Panc1 (cell line): ENCODE measurements at regions of chr11 and their contacts with region 1.

Region 1: DNA sequence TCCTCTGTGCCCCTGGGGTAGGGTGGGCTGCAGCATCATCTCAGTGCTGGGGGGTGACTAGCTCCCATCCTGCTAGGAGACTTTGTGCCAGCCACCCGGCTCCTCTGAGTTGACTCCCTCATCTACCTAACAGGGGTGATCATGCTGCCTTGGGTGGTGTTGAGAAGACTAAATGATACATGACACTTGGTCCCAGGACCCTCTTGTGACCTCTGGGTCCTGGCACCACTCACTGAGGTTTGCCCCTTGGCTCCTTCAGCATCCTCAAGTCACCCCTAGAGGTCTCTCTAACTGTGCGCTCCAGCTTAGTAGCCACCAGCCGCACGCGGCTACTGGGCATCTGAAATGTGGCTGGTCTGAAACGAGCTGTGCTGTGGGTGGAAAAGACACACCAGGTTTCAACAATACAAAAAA is 72.1 kb downstream of the LRRC32 start:
- DNase-seq: peak; percentile 24
- ATAC-seq: peak; percentile 87
- H3K4me3 ChIP-seq: no peak overlapping the region
- H3K27ac ChIP-seq: no peak overlapping the region
- H3K4me1 ChIP-seq: no peaks in the 10 kb centered on the region; the same call in 1 of the 2 replicates
- H3K27me3 ChIP-seq: no peaks in the 10 kb centered on the region
- CTCF ChIP-seq: peak; percentile 91

Region 2: GRCh38 chr11:76329084-76329984 is 269.1 kb before region 1 on chr11:
- CTCF ChIA-PET with region 1: interaction called, 10 read pairs
- POLR2A ChIA-PET with region 1: no interaction called
- in situ Hi-C with region 1: no loop called
- intact Hi-C with region 1: no loop called
- DNase-seq: no peak
- ATAC-seq: 0 out of 2 replicates have a peak, but pooled peaks have one; percentile 28
- H3K4me3 ChIP-seq: no peak overlapping the region
- H3K27ac ChIP-seq: no peak overlapping the region
- H3K4me1 ChIP-seq: no peaks in the 10 kb centered on the region
- H3K27me3 ChIP-seq: no peaks in the 10 kb centered on the region
- CTCF ChIP-seq: no peak

Region 3: GRCh38 chr11:76670485-76671236 is 72.2 kb after region 1 on chr11 and contains the start of gene LRRC32:
- CTCF ChIA-PET with region 1: interaction called, 10 read pairs
- POLR2A ChIA-PET with region 1: no interaction called
- in situ Hi-C with region 1: no loop called
- intact Hi-C with region 1: no loop called
- DNase-seq: no peak
- ATAC-seq: peak; percentile 28; the same call in 1 of the 2 replicates
- H3K4me3 ChIP-seq: peak within 1 kb of the TSS; percentile 38 to 50
- H3K27ac ChIP-seq: no peak within 1 kb of the TSS
- H3K4me1 ChIP-seq: peaks cover 3% of the 10 kb centered on the region; the same call in 1 of the 2 replicates
- H3K27me3 ChIP-seq: peaks cover 8% of the 10 kb centered on the region
- CTCF ChIP-seq: no peak
- total RNA-seq, gene LRRC32: 0.15 TPM

Region 4: GRCh38 chr11:76680518-76681425 is 82.3 kb after region 1 on chr11:
- CTCF ChIA-PET with region 1: interaction called, 6 read pairs
- POLR2A ChIA-PET with region 1: no interaction called
- in situ Hi-C with region 1: no loop called
- intact Hi-C with region 1: loop called (anchors 1 kb)
- DNase-seq: no peak
- ATAC-seq: peak; percentile 91
- H3K4me3 ChIP-seq: no peak overlapping the region
- H3K27ac ChIP-seq: no peak overlapping the region
- H3K4me1 ChIP-seq: no peaks in the 10 kb centered on the region
- H3K27me3 ChIP-seq: no peaks in the 10 kb centered on the region
- CTCF ChIP-seq: peak; percentile 95